ENCODE measurements at regions of chr15 and their contacts with region 1.

Region 1: GRCh38 chr15:97903971-97904572 is 56.4 kb upstream of the ARRDC4 start:
- DNase-seq: no peak
- H3K4me3 ChIP-seq: no peak overlapping the region
- H3K27ac ChIP-seq: no peak overlapping the region
- H3K27me3 ChIP-seq: no peaks in the 10 kb centered on the region
- CTCF ChIP-seq: peak; percentile 70

Region 2: GRCh38 chr15:97210277-97210676 is 693.8 kb before region 1 on chr15:
- CTCF ChIA-PET with region 1: no interaction called
- POLR2A ChIA-PET with region 1: no interaction called
- DNase-seq: no peak
- H3K4me3 ChIP-seq: no peak overlapping the region
- H3K27ac ChIP-seq: no peak overlapping the region
- H3K27me3 ChIP-seq: no peaks in the 10 kb centered on the region
- CTCF ChIP-seq: no peak

Region 3: GRCh38 chr15:97915261-97915660 is 11.2 kb after region 1 on chr15:
- CTCF ChIA-PET with region 1: no interaction called
- POLR2A ChIA-PET with region 1: no interaction called
- DNase-seq: no peak
- H3K4me3 ChIP-seq: no peak overlapping the region
- H3K27ac ChIP-seq: no peak overlapping the region
- H3K27me3 ChIP-seq: no peaks in the 10 kb centered on the region
- CTCF ChIP-seq: no peak

Region 4: GRCh38 chr15:98085003-98085639 is 181.0 kb after region 1 on chr15:
- CTCF ChIA-PET with region 1: interaction called, 12 read pairs
- POLR2A ChIA-PET with region 1: no interaction called
- DNase-seq: peak; percentile 16
- H3K4me3 ChIP-seq: no peak overlapping the region
- H3K27ac ChIP-seq: no peak overlapping the region
- H3K27me3 ChIP-seq: no peaks in the 10 kb centered on the region
- CTCF ChIP-seq: peak; percentile 60

Region 5: DNA sequence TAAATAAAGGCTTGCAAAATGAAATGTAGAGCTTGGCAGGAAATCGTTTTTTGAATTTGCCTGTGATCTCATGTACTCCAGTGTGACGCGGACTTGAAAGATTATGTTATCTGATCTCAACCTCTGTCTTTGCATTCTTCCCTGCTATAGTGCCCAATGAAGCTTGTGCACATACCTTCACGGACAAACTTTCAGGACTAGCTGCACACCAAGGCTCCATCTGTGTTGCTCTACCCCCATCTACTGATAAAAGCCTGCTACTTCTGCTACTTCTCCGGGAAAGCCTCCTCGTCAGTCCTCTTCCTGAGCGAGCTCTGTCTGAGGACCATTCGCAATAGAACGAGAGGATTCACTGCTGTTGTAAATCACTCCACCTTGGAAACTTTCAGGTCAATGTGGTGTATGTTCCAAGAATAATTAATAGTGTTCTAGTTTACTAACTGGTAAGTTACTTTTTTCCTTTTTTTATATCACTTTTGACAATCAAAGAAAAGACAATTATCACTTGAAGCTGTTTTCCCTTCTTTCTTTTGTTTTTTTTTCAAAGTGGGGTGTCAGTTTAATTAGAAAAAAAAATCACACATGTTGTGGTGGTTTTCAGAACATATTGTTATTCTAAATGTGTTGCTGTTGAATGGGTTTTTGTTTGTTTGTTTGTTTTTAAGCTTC is 274.0 kb after region 1 on chr15:
- CTCF ChIA-PET with region 1: interaction called, 15 read pairs
- POLR2A ChIA-PET with region 1: no interaction called
- DNase-seq: peak; percentile 6
- H3K4me3 ChIP-seq: no peak overlapping the region
- H3K27ac ChIP-seq: no peak overlapping the region
- H3K27me3 ChIP-seq: no peaks in the 10 kb centered on the region
- CTCF ChIP-seq: peak; percentile 63

Measured in AG04450 (cell line).